ENCODE measurements at regions of chr2 and their contacts with region 1.

Region 1: DNA sequence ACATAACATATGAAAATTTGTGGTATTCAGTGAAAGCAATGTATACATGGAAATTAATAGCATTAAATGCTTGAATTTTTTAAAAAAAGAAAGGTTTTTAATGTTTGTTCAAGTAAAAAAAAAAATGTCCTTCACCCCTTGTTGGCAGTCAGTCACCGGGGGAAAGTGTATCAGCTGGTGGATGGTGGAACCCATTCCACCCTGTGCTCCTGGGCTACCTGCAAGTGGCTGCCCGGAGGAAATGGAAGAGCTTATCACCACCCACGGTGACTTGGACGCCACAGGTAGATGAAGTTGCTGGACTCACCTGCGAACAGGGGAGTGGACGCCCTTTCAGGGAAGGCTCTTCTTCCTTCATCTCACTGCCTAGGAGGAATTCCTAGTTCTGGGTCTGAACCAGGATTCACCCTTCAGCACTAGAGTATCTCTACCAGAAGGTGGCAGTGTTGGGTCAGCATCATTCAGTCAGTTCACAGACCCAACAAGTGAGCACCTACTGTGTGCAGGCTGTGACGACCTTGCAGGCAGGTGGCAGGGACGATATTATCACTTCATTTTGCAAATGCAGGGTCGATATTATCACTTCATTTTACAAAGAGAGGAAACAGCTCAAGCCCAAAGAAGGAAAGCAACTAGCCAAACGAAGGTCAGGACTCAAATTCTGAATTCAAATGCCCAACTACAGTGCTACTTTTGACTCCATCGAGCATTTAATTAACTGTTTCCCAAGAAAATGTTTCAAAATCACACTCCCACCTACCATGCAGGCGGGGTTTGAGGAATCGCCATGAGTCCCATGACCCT is 35.8 kb downstream of the CIB4 start:
- DNase-seq: peak in 1 of 4 donors; percentile 67
- ATAC-seq: peak; percentile 86
- H3K4me3 ChIP-seq: no peak overlapping the region
- H3K27ac ChIP-seq: no peak overlapping the region
- H3K4me1 ChIP-seq: peaks cover 3 to 11% of the 10 kb centered on the region in 2 donors
- H3K27me3 ChIP-seq: peaks cover 0 to 12% of the 10 kb centered on the region in 2 donors
- CTCF ChIP-seq: peak; percentile 83 to 87

Region 2: GRCh38 chr2:26555246-26556133 is 49.9 kb before region 1 on chr2:
- intact Hi-C with region 1: no loop called
- DNase-seq: peak in 1 of 4 donors; percentile 43
- ATAC-seq: no peak
- H3K4me3 ChIP-seq: no peak overlapping the region
- H3K27ac ChIP-seq: no peak overlapping the region
- H3K4me1 ChIP-seq: no peaks in the 10 kb centered on the region
- H3K27me3 ChIP-seq: peaks cover 16 to 60% of the 10 kb centered on the region in 2 donors
- CTCF ChIP-seq: no peak

Region 3: GRCh38 chr2:26704441-26704977 is 99.1 kb after region 1 on chr2:
- intact Hi-C with region 1: no loop called
- DNase-seq: peak in 1 of 4 donors; percentile 58
- ATAC-seq: peak; percentile 20
- H3K4me3 ChIP-seq: no peak overlapping the region
- H3K27ac ChIP-seq: no peak overlapping the region
- H3K4me1 ChIP-seq: no peaks in the 10 kb centered on the region
- H3K27me3 ChIP-seq: peaks cover 0 to 9% of the 10 kb centered on the region in 2 donors
- CTCF ChIP-seq: no peak

Region 4: GRCh38 chr2:26745609-26746327 is 140.4 kb after region 1 on chr2:
- intact Hi-C with region 1: loop called (anchors 2 to 10 kb)
- DNase-seq: peak; percentile 76 to 89 (median 82)
- ATAC-seq: peak; percentile 96
- H3K4me3 ChIP-seq: no peak overlapping the region
- H3K27ac ChIP-seq: no peak overlapping the region
- H3K4me1 ChIP-seq: peaks cover 0 to 5% of the 10 kb centered on the region in 2 donors
- H3K27me3 ChIP-seq: no peaks in the 10 kb centered on the region
- CTCF ChIP-seq: peak; percentile 87 to 88

Measured in left lung (tissue), 14 donors.